CD8-positive, alpha-beta memory T cell (primary cell): ENCODE measurements at regions of chr6 and their contacts with region 1.

Region 1: DNA sequence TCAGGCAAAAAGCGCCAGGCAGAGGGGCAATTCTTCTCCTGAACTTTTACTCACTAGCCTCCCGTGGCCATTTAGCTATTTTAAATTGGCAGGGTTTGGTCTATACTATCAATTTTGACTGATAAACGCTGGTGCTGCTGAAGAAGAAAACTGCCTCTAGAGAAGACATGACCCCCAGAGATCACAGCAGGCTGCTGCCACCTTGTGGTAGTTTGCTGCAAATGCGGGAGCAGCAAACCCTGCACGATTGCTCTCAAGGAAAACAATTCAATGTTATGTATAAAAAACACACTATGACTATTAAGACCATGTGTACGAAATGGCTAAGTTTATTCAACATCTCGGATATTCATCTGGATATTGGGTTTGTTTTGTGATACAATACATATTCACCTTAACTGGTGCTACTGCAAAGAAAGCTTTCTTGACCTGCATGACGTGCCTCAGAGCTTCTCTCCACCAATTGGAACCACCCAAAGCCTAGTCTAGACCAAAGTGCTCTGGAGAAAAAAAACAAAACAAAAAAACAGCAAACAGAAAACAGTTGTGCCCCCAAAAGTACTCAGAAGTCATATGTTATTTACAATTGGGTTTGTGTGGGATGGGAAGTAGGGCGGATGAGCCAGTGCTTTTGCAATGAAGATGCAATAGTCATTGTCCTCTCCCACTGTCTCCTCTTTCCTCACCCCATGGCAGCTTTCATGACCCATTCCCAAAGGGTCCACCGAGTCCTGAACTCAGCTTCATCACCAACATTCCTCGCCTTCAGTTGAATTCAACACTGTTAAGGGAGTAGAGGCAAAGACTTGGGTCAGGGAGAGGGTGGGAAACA is 19.6 kb upstream of the IL17F start:
- DNase-seq: peak; percentile 45 to 78 (median 55)
- H3K4me3 ChIP-seq: no peak overlapping the region
- H3K4me3 Mint-ChIP-seq: no peak overlapping the region
- H3K27ac ChIP-seq: no peak overlapping the region
- H3K27ac Mint-ChIP-seq: peak overlapping the region in 5 of 8 donors; percentile 4 to 58 (median 20)
- H3K4me1 ChIP-seq: no peaks in the 10 kb centered on the region
- H3K4me1 Mint-ChIP-seq: peaks cover 6 to 10% (median 8%) of the 10 kb centered on the region in 3 donors
- H3K27me3 ChIP-seq: no peaks in the 10 kb centered on the region
- H3K27me3 Mint-ChIP-seq: no peaks in the 10 kb centered on the region

Region 2: DNA sequence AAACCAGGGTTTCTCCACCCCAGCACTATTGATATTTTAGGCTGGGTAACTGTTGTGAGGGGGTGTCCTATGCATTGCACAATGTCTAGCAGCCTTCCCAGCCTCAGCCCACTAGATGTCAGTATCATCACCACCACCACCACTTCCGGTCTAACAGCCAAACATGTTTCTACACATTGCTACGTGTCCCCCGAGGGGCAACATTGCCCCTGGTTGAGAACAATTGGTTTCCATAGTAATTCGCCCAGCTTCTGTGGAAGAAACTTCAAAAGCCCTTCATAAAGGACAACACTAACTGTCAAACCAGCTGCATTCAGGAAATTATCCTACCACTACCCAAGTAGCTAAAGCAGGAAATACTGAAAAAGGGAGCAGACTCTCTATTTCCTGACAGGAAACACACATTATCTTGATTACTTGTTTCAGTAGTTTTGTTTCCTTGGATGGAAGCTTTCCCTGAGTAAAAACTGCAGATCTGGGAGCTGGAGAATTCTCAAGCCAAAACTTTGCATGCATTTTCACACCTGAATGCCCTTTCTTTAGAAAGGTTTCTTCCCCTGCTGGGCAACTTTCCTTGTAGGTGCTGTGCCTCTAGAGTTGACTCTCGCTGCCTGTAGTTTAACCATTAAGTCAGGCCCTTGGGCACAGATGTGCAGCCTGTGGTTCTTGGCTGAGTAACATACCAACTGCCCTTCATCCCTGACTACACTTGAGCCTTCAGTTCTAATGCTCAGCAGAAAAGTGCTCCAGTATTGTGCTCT is 200.2 kb before region 1 on chr6:
- CTCF ChIA-PET with region 1: interaction called, 13 read pairs
- POLR2A ChIA-PET with region 1: no interaction called
- DNase-seq: peak; percentile 21 to 70 (median 56)
- H3K4me3 ChIP-seq: peak overlapping the region; percentile 35
- H3K4me3 Mint-ChIP-seq: peak overlapping the region; percentile 13 to 92 (median 83)
- H3K27ac ChIP-seq: no peak overlapping the region
- H3K27ac Mint-ChIP-seq: peak overlapping the region in 7 of 8 donors; percentile 45 to 95 (median 84)
- H3K4me1 ChIP-seq: peaks cover 7% of the 10 kb centered on the region
- H3K4me1 Mint-ChIP-seq: peaks cover 10 to 14% (median 13%) of the 10 kb centered on the region in 3 donors
- H3K27me3 ChIP-seq: no peaks in the 10 kb centered on the region
- H3K27me3 Mint-ChIP-seq: peaks cover 0 to 12% of the 10 kb centered on the region in 2 donors

Region 3: DNA sequence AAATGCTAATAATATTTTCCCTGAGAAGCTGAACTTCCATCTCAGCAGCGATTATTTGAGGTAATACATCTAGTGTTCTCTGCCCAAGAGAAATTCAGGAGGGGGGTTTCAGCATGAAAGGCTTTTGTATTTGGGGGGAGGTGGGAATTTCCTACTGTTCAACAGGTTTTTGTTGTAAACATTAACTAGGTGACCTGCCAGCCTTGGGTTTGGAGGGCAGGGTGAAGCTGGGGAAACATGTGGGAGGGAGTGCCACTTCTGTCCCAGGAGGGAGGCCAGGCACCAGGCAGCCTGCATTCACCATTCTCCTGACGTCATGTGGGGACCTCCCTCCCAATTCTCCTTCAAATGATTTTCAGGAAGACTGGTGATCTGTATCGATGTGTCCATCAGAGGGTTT is 138.8 kb before region 1 on chr6:
- CTCF ChIA-PET with region 1: no interaction called
- POLR2A ChIA-PET with region 1: no interaction called
- DNase-seq: no peak
- H3K4me3 ChIP-seq: no peak overlapping the region
- H3K4me3 Mint-ChIP-seq: no peak overlapping the region
- H3K27ac ChIP-seq: no peak overlapping the region
- H3K27ac Mint-ChIP-seq: no peak overlapping the region
- H3K4me1 ChIP-seq: no peaks in the 10 kb centered on the region
- H3K4me1 Mint-ChIP-seq: no peaks in the 10 kb centered on the region
- H3K27me3 ChIP-seq: peaks cover 4% of the 10 kb centered on the region
- H3K27me3 Mint-ChIP-seq: peaks cover 21 to 59% of the 10 kb centered on the region in 2 donors

Region 4: DNA sequence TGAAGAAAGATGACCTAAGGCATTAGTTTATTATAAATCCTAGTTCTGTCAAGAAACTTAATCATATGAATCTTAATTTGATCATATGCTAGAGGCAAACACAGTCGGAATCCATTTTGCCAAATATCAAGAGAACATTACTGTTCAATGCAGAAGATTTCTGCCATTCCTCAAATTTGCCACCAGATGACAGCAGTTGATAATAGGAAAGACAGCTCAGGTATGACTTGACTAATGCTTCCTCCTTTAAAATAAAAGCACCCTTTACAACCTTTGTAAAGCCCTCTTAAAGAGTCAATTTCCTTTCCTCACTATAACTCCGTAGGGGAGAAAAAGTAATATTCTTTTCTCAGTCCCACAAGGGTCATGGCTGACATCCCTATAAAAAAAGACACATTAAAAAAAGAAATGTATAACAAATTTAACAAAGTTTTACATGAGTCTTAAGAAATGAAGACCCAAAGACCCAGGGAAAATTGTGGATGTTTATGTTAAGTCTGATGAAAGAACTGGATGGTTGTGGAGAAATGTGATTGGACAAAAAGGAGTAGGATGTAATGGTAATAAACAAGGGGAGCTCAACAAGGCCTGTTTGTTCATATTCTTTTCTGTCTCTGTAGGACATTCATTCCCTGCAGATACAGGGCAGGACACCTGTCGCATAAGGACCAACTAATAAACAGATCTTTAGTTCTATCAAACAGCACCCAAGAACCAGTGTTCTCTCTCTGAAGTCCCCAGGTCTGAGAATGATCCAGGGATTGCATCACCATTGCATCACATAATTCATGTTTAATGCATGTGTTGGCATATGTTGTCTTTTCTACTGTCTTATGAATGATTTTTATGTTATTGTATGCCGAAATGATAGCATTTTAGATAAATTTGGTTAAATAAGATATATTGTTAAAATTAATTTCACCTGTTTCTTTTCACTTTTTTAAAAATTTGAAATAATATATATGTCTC is 100.7 kb before region 1 on chr6:
- CTCF ChIA-PET with region 1: interaction called, 18 read pairs
- POLR2A ChIA-PET with region 1: no interaction called
- DNase-seq: peak in 2 of 5 donors; percentile 35 to 41
- H3K4me3 ChIP-seq: no peak overlapping the region
- H3K4me3 Mint-ChIP-seq: no peak overlapping the region
- H3K27ac ChIP-seq: no peak overlapping the region
- H3K27ac Mint-ChIP-seq: no peak overlapping the region
- H3K4me1 ChIP-seq: no peaks in the 10 kb centered on the region
- H3K4me1 Mint-ChIP-seq: no peaks in the 10 kb centered on the region
- H3K27me3 ChIP-seq: peaks cover 5% of the 10 kb centered on the region
- H3K27me3 Mint-ChIP-seq: peaks cover 25 to 42% of the 10 kb centered on the region in 2 donors

Region 5: DNA sequence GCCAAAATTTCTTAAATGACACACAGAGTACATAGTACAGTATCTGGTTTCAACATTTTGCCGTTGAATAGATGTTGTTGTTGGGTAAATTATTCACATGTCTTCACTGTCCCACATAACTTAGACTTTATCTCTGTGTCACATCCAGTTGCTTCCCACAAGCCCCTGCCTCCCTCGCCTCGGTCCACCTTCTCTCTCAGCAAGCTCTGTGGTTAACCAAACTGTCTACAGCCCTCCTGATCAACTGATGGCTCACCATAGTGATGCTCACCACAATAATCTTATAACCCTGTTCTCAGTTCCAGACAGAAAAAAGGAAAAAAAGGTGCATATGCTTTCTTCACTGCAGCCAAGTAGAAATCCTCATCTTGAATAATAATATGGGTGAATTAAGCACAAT is 42.6 kb before region 1 on chr6:
- CTCF ChIA-PET with region 1: no interaction called
- POLR2A ChIA-PET with region 1: no interaction called
- DNase-seq: no peak
- H3K4me3 ChIP-seq: no peak overlapping the region
- H3K4me3 Mint-ChIP-seq: no peak overlapping the region
- H3K27ac ChIP-seq: no peak overlapping the region
- H3K27ac Mint-ChIP-seq: no peak overlapping the region
- H3K4me1 ChIP-seq: no peaks in the 10 kb centered on the region
- H3K4me1 Mint-ChIP-seq: peaks cover 6 to 8% (median 7%) of the 10 kb centered on the region in 3 donors
- H3K27me3 ChIP-seq: no peaks in the 10 kb centered on the region
- H3K27me3 Mint-ChIP-seq: peaks cover 4 to 21% of the 10 kb centered on the region in 2 donors

Region 6: GRCh38 chr6:52276130-52276529 is 12.2 kb after region 1 on chr6:
- CTCF ChIA-PET with region 1: interaction called, 14 read pairs
- POLR2A ChIA-PET with region 1: no interaction called
- DNase-seq: no peak
- H3K4me3 ChIP-seq: no peak overlapping the region
- H3K4me3 Mint-ChIP-seq: no peak overlapping the region
- H3K27ac ChIP-seq: no peak overlapping the region
- H3K27ac Mint-ChIP-seq: no peak overlapping the region
- H3K4me1 ChIP-seq: no peaks in the 10 kb centered on the region
- H3K4me1 Mint-ChIP-seq: peaks cover under 1 to 17% (median 10%) of the 10 kb centered on the region in 3 donors
- H3K27me3 ChIP-seq: no peaks in the 10 kb centered on the region
- H3K27me3 Mint-ChIP-seq: no peaks in the 10 kb centered on the region